ENCODE measurements at regions of chr18 and their contacts with region 1.

Region 1: DNA sequence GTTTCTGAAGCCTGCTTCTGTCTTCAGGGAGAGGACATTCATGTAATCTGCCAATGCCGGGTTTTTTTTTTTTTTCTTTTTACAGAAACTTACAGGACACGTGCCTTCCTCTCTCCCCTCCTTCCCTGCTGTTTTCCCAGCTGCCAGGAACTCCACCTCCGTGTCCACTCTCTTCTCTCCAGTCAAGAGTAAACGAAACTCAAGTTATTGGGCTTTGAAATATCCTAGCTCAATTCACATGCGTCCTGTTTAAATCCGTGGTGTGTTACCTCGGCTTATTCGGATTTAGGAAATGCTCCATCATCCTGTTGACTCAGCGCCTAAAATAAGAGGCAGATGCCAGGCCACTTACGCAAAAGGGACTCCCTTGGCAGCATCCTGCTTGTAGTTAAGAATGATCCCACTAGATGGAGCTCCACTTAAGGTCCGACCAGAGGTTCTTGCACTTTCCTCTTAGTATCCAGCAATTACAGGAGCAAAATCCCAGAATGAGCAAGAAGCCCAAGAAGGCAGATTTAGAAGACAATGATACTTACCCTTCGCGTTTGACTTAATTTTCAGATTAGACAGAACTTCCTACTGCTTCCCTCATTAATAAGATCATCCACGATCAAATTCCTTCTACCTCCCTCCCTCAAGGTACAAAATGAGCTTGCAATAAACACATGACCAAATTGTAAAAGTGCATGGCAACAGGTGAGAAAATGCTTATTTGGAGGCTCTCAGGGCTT is 97.2 kb upstream of the ZCCHC2 start:
- DNase-seq: peak; percentile 89
- H3K4me3 Mint-ChIP-seq: peak overlapping the region; percentile 57
- H3K27ac Mint-ChIP-seq: peak overlapping the region; percentile 82
- H3K4me1 Mint-ChIP-seq: peaks cover 51% of the 10 kb centered on the region
- H3K27me3 Mint-ChIP-seq: no peaks in the 10 kb centered on the region
- CTCF ChIP-seq: peak; percentile 62

Region 2: GRCh38 chr18:62324917-62325805 is 100.5 kb before region 1 on chr18 and contains the start of gene TNFRSF11A:
- CTCF ChIA-PET with region 1: interaction called, 13 read pairs
- intact Hi-C with region 1: loop called (anchors 2 kb)
- DNase-seq: peak; percentile 88
- H3K4me3 Mint-ChIP-seq: peak within 1 kb of the TSS; percentile 90
- H3K27ac Mint-ChIP-seq: peak within 1 kb of the TSS; percentile 79
- H3K4me1 Mint-ChIP-seq: peaks cover 62% of the 10 kb centered on the region
- H3K27me3 Mint-ChIP-seq: no peaks in the 10 kb centered on the region
- CTCF ChIP-seq: peak; percentile 54
- total RNA-seq, gene TNFRSF11A: 94.6 and 126 TPM in 2 replicates

Region 3: DNA sequence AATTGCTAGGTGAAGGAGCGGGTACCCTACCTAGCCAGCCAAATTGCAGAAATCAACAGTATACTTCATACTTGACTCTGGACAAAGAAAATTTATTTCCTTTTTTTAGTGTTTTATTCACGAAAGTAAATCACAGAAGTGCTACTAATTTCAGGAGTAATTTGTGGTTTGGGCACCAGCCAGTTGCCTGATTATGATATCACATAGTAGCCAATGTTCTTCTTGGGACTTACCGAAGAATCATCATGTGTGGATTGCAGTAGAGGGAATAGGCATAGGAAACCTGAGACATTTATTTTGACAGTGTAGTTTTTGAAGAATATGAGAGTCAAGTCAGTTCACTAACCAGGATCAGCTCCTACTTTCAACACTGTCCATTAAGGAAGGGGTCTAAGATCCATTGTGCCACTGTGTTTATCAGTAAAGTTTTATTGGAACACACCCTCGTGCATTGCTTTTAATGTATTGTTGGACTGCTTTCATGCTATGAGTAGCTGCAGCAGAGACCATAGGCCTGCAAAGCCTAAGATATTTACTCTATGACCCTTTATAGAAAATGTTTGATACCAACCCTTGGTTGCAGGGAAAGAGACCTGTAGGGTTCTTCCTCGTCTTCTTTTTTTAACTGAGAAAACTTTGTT is 68.4 kb before region 1 on chr18:
- CTCF ChIA-PET with region 1: no interaction called
- intact Hi-C with region 1: no loop called
- DNase-seq: no peak
- H3K4me3 Mint-ChIP-seq: no peak overlapping the region
- H3K27ac Mint-ChIP-seq: no peak overlapping the region
- H3K4me1 Mint-ChIP-seq: no peaks in the 10 kb centered on the region
- H3K27me3 Mint-ChIP-seq: no peaks in the 10 kb centered on the region
- CTCF ChIP-seq: no peak

Region 4: DNA sequence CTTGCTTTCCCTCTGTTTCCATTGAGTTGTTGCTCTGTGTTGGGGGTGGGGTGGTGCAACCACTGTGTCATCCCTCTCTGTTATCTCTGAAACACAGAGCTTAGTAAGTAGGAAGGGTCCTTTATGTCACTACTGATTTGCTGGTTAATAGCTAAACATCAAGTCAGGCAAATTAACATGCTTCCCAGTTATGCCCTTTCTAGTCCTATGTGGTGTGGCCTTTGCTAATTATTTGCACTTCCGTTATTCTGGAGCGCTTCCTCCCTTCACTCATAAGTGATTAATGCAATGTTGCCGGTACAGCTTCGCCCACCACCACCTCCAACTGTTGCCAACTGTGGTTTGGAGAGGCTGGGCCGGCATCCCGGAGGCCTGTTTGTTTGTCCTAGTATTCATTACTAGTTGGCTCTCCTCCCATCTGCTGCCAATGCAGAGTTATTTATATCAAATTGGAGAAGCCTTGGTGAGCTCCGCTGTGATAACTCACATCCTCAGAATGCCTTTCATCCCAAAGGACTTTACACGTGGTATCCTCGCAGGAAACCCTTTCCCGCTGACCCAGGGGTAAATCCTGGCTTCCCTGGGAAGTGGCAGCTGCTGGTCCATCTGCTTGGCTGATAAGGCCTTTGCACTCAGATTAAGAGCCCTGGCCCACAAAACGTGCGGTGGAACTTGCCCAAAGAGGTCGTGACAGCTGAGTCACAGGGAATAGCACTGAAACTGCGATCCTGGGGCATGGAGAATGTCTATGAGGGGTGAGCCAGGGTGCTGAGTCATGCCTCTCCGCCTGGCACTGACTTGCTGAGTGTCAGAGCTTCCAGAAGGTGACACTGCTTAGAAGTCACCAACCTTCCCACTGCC is 25.1 kb after region 1 on chr18:
- CTCF ChIA-PET with region 1: interaction called, 18 read pairs
- intact Hi-C with region 1: no loop called
- DNase-seq: peak; percentile 86
- H3K4me3 Mint-ChIP-seq: peak overlapping the region; percentile 25
- H3K27ac Mint-ChIP-seq: peak overlapping the region; percentile 62
- H3K4me1 Mint-ChIP-seq: peaks cover 51% of the 10 kb centered on the region
- H3K27me3 Mint-ChIP-seq: no peaks in the 10 kb centered on the region
- CTCF ChIP-seq: no peak

Region 5: GRCh38 chr18:62526098-62527025 is 100.7 kb after region 1 on chr18:
- CTCF ChIA-PET with region 1: interaction called, 9 read pairs
- intact Hi-C with region 1: loop called (anchors 2 kb)
- DNase-seq: peak; percentile 83
- H3K4me3 Mint-ChIP-seq: peak overlapping the region; percentile 84
- H3K27ac Mint-ChIP-seq: peak overlapping the region; percentile 97
- H3K4me1 Mint-ChIP-seq: peaks cover 38% of the 10 kb centered on the region
- H3K27me3 Mint-ChIP-seq: no peaks in the 10 kb centered on the region
- CTCF ChIP-seq: no peak

Region 6: DNA sequence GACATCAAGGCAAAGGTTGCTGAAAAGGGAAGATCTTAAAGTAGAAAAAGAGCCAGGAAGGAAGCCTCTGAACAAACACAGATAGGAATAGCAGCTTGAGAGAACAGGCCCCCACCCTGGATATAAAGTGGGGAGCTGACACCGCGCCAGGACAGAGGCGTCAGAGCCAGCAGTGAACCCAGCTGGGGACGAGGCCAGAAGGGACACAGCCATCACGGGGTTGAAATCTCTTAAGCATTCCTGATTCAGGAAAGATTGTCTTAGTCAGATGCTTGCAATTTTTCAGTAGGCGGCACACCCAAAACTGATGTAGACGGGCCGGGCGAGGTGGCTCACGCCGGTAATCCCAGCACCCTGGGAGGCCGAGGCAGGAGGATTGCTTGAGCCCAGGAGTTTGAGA is 195.9 kb after region 1 on chr18:
- CTCF ChIA-PET with region 1: no interaction called
- intact Hi-C with region 1: no loop called
- DNase-seq: no peak
- H3K4me3 Mint-ChIP-seq: no peak overlapping the region
- H3K27ac Mint-ChIP-seq: no peak overlapping the region
- H3K4me1 Mint-ChIP-seq: peaks cover 8% of the 10 kb centered on the region
- H3K27me3 Mint-ChIP-seq: peaks cover 10% of the 10 kb centered on the region
- CTCF ChIP-seq: no peak